ENCODE measurements at regions of chr20 and their contacts with region 1.

Region 1: GRCh38 chr20:9353916-9354276 is 160.5 kb upstream of the LAMP5 start:
- DNase-seq: no peak
- H3K4me3 Mint-ChIP-seq: no peak overlapping the region
- H3K27ac Mint-ChIP-seq: no peak overlapping the region
- H3K4me1 Mint-ChIP-seq: no peaks in the 10 kb centered on the region
- H3K27me3 Mint-ChIP-seq: no peaks in the 10 kb centered on the region
- CTCF ChIP-seq: no peak

Region 2: GRCh38 chr20:8790442-8791074 is 563.3 kb before region 1 on chr20:
- CTCF ChIA-PET with region 1: no interaction called
- intact Hi-C with region 1: loop called (anchors 1 kb)
- DNase-seq: peak; percentile 27
- H3K4me3 Mint-ChIP-seq: no peak overlapping the region
- H3K27ac Mint-ChIP-seq: no peak overlapping the region
- H3K4me1 Mint-ChIP-seq: no peaks in the 10 kb centered on the region
- H3K27me3 Mint-ChIP-seq: no peaks in the 10 kb centered on the region
- CTCF ChIP-seq: peak; percentile 71

Region 3: GRCh38 chr20:9955646-9956045 is 601.8 kb after region 1 on chr20:
- CTCF ChIA-PET with region 1: no interaction called
- intact Hi-C with region 1: no loop called
- DNase-seq: no peak
- H3K4me3 Mint-ChIP-seq: no peak overlapping the region
- H3K27ac Mint-ChIP-seq: no peak overlapping the region
- H3K4me1 Mint-ChIP-seq: peaks cover 8% of the 10 kb centered on the region
- H3K27me3 Mint-ChIP-seq: no peaks in the 10 kb centered on the region
- CTCF ChIP-seq: no peak